Spleen (tissue), 13 donors: ENCODE measurements at regions of chr2 and their contacts with region 1.

Region 1: GRCh38 chr2:201118121-201118960 is 2.4 kb downstream of the CFLAR start:
- DNase-seq: peak; percentile 96
- H3K4me3 ChIP-seq: peak overlapping the region; percentile 57 to 81 (median 78)
- H3K27ac ChIP-seq: peak overlapping the region; percentile 89 to 100 (median 100)
- H3K4me1 ChIP-seq: peaks cover 20 to 83% (median 58%) of the 10 kb centered on the region in 6 donors
- H3K27me3 ChIP-seq: no peaks in the 10 kb centered on the region
- CTCF ChIP-seq: peak in 10 of 11 experiments; percentile 40 to 63 (median 52)
- POLR2A ChIP-seq: peak; percentile 57 to 86 (median 73)

Region 2: GRCh38 chr2:201157694-201158093 is 39.4 kb after region 1 on chr2:
- intact Hi-C with region 1: loop called (anchors 2 kb)
- DNase-seq: no peak
- H3K4me3 ChIP-seq: peak overlapping the region in 1 of 8 donors; percentile 44
- H3K27ac ChIP-seq: peak overlapping the region; percentile 61 to 89 (median 80)
- H3K4me1 ChIP-seq: peaks cover 29 to 84% (median 64%) of the 10 kb centered on the region in 6 donors
- H3K27me3 ChIP-seq: no peaks in the 10 kb centered on the region
- CTCF ChIP-seq: no peak
- POLR2A ChIP-seq: no peak

Region 3: GRCh38 chr2:201171259-201171814 is 53.0 kb after region 1 on chr2:
- intact Hi-C with region 1: no loop called
- DNase-seq: no peak
- H3K4me3 ChIP-seq: no peak overlapping the region
- H3K27ac ChIP-seq: no peak overlapping the region
- H3K4me1 ChIP-seq: peaks cover 0 to 38% (median 18%) of the 10 kb centered on the region in 6 donors
- H3K27me3 ChIP-seq: no peaks in the 10 kb centered on the region
- CTCF ChIP-seq: no peak
- POLR2A ChIP-seq: no peak